Gastrocnemius medialis (tissue), 4 donors: ENCODE measurements at regions of chr11 and their contacts with region 1.

Region 1: GRCh38 chr11:118689851-118690552 is 10.6 kb upstream of the TREH start:
- DNase-seq: peak; percentile 46 to 89
- ATAC-seq: peak; percentile 89 to 91
- H3K4me3 ChIP-seq: peak overlapping the region; percentile 47 to 64 (median 59)
- H3K27ac ChIP-seq: peak overlapping the region; percentile 70 to 83 (median 77)
- H3K4me1 ChIP-seq: peaks cover 0 to 4% of the 10 kb centered on the region in 2 donors
- H3K27me3 ChIP-seq: no peaks in the 10 kb centered on the region
- CTCF ChIP-seq: peak; percentile 80 to 89 (median 87)
- POLR2A ChIP-seq: no peak

Region 2: DNA sequence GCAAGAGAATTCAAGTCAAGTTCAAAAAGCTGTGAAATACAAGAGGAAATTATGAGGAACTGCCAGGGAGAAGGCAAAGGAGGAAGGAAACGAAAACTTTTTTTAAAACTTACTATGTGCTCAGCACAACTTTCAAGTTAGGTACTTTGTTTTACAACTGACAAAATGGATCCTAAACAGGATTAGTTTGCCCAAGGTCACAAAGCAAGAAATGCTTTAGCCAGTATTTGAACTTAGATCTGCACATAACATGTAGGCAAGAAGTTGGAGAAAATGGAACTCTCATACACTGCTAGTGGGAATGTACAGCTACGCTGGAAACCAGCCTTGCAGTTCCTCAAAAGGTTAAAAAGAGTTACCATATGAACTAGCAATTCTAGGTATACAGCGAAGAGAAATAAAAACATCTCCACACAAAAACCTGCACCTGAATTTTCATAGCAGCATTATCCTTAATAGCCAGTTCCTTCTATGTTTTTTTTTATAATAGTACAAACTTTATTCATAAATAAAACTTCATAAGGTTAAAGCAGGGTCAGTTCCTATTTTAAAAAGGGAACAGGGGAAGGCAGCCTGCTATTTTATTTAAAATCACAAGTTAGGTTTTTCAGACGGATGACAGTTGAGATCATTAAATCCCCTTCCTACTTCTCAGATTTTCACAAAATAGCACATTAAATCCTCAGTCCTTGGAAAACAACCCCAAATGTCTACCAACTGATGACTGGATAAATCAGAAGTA is 81.7 kb after region 1 on chr11:
- in situ Hi-C with region 1: loop called in 2 of 4 experiments (anchors 10 to 25 kb)
- intact Hi-C with region 1: no loop called
- DNase-seq: no peak
- ATAC-seq: no peak
- H3K4me3 ChIP-seq: no peak overlapping the region
- H3K27ac ChIP-seq: peak overlapping the region; percentile 3 to 47 (median 32)
- H3K4me1 ChIP-seq: peaks cover 60 to 81% of the 10 kb centered on the region in 2 donors
- H3K27me3 ChIP-seq: no peaks in the 10 kb centered on the region
- CTCF ChIP-seq: no peak
- POLR2A ChIP-seq: no peak

Region 3: DNA sequence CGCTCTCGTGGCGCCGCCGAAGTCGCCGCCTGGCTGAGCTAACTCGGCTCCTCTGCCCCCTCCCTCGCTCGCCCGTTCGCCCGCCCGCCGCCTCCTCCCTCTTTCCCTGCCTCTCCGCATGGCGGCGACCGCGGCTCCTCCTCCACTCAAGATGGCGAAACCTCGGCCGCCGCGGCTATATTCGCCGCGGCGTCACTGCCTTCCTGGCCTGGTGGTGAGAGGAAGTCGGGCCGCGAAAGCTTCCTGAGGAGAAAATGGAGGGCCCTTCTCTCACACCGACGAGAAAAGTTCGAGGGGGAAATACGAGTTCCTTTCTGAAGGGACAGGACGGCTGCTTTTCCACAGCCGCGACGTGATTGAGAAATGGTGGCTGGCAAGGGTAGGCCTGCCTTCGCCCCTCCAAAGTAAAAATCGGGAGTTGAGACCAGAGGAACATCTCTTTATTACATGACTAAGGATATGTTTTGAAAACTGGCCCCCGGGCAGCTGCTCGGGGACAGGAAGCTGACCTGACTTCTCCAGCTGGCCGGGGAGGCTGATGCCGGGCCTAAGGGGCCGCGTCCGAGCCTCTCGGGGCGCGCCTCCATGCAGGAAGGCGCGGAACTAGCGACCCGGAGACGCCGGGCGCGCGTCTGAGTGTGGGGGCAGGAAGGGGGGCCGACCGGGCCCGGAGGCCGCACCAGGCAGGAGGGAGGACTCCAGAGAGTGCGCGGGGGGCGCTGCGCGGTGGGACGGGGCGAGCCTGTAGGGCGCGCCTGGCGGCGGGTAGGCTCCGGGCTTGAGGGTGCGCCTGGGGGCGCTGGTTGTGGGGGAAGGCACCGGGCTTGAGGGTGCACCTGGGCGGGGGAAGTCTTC is 101.3 kb after region 1 on chr11 and contains the start of gene DDX6:
- in situ Hi-C with region 1: loop called in 1 of 4 experiments (anchors 25 kb)
- intact Hi-C with region 1: loop called (anchors 2 kb)
- DNase-seq: peak; percentile 86 to 89
- ATAC-seq: peak; percentile 78 to 86
- H3K4me3 ChIP-seq: peak within 1 kb of the TSS; percentile 80 to 96 (median 86)
- H3K27ac ChIP-seq: peak within 1 kb of the TSS; percentile 93 to 100 (median 98)
- H3K4me1 ChIP-seq: peaks cover 27% of the 10 kb centered on the region in 2 donors
- H3K27me3 ChIP-seq: no peaks in the 10 kb centered on the region
- CTCF ChIP-seq: peak; percentile 15 to 57 (median 37)
- POLR2A ChIP-seq: peak; percentile 82 to 90
- total RNA-seq, gene DDX6: 73.4 to 125 (median 98.2) TPM

Region 4: DNA sequence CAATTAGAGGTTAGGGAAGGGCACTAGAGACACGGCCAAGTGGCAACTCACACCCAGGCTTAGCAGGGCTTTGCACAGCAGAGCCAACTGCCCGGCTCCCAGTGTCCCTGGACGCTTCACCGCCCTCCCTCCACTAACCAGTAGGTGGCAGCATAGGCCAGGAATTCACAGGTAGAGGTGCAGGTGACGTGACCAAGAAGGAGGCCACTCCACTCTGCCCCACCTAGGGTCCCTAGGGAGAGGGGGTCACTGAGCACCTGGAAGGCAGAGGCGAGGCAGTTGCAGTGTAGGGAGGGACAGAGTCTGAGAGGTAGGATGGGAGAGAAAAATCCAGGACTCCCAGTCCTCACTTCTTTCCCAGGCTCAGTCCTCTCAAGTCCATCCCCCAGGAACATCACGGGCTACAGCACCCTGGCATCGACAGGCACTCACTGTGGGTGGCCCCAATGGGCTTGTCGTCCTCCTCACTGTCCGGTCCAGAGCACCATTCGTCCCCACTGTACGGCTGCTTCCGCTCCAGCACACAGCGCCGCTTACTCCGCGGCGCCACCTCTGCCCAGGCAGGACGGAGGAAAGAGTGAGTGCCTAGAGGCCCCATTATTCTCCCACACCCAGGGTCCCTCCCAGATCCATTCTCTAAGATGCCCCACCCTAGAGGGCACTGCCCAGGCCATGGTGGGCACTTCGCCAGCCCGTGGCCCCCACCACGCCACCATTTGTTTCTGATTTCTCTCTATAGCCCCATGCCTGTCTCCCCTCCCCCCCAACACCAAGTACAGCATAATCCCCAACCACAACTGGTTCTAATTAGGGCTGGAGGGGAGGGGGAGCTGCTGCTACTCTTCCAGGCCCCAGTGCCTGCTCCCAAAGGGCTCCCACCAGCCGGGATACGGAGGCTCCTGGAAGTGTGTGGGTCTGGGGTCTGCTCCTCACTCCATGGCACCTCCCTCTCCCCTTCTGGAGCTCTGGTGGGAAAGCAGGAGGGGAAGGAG is 217.3 kb after region 1 on chr11:
- in situ Hi-C with region 1: no loop called
- intact Hi-C with region 1: loop called (anchors 1 kb)
- DNase-seq: peak; percentile 72 to 87
- ATAC-seq: peak; percentile 41 to 48
- H3K4me3 ChIP-seq: no peak overlapping the region
- H3K27ac ChIP-seq: peak overlapping the region; percentile 89 to 100 (median 96)
- H3K4me1 ChIP-seq: peaks cover 52 to 54% of the 10 kb centered on the region in 2 donors
- H3K27me3 ChIP-seq: no peaks in the 10 kb centered on the region
- CTCF ChIP-seq: peak; percentile 94 to 99 (median 98)
- POLR2A ChIP-seq: no peak

Region 5: GRCh38 chr11:118956094-118956846 is 266.3 kb after region 1 on chr11 and contains the start of gene UPK2:
- in situ Hi-C with region 1: loop called in 3 of 4 experiments (anchors 5 to 10 kb)
- intact Hi-C with region 1: loop called (anchors 1 kb)
- DNase-seq: peak; percentile 74 to 82
- ATAC-seq: peak; percentile 95 to 97
- H3K4me3 ChIP-seq: no peak within 1 kb of the TSS
- H3K27ac ChIP-seq: no peak within 1 kb of the TSS
- H3K4me1 ChIP-seq: no peaks in the 10 kb centered on the region
- H3K27me3 ChIP-seq: no peaks in the 10 kb centered on the region
- CTCF ChIP-seq: peak; percentile 94 to 97 (median 96)
- POLR2A ChIP-seq: no peak
- total RNA-seq, gene UPK2: not detected